OCI-LY7 (cell line): ENCODE measurements at regions of chr4 and their contacts with region 1.

Region 1: GRCh38 chr4:128863312-128864075 is 54.0 kb downstream of the JADE1 start:
- DNase-seq: peak; percentile 62
- H3K4me3 ChIP-seq: no peak overlapping the region
- H3K27ac ChIP-seq: no peak overlapping the region
- H3K4me1 ChIP-seq: peaks cover 5% of the 10 kb centered on the region
- CTCF ChIP-seq: peak; percentile 97

Region 2: GRCh38 chr4:128191115-128191781 is 672.2 kb before region 1 on chr4:
- CTCF ChIA-PET with region 1: no interaction called
- POLR2A ChIA-PET with region 1: no interaction called
- intact Hi-C with region 1: loop called (anchors 1 kb)
- DNase-seq: peak; percentile 77
- H3K4me3 ChIP-seq: no peak overlapping the region
- H3K27ac ChIP-seq: no peak overlapping the region
- H3K4me1 ChIP-seq: no peaks in the 10 kb centered on the region
- CTCF ChIP-seq: peak; percentile 99

Region 3: GRCh38 chr4:128454281-128455075 is 409.0 kb before region 1 on chr4:
- CTCF ChIA-PET with region 1: no interaction called
- POLR2A ChIA-PET with region 1: no interaction called
- intact Hi-C with region 1: loop called (anchors 5 kb)
- DNase-seq: peak; percentile 70
- H3K4me3 ChIP-seq: no peak overlapping the region
- H3K27ac ChIP-seq: no peak overlapping the region
- H3K4me1 ChIP-seq: no peaks in the 10 kb centered on the region
- CTCF ChIP-seq: peak; percentile 80

Region 4: DNA sequence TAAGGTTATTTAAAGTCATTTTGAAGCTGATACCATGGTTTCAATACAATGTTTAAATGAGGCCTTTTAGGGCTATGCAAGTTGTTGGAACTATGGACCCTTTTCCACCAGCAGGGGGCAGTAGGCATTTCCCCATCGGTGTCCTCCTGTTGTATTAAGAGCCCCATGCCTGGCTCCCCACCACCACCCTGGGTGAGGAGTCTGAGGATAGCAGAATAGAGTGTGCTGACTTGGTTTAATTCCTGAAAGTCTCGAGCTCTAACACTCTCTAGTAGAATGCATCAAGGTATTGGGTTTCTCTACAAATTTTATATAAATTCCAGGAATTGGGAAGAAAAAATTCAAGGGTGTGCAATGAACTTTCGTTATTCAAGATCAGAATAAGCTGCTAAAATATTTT is 288.8 kb before region 1 on chr4:
- CTCF ChIA-PET with region 1: no interaction called
- POLR2A ChIA-PET with region 1: no interaction called
- intact Hi-C with region 1: loop called (anchors 5 kb)
- DNase-seq: peak; percentile 74
- H3K4me3 ChIP-seq: no peak overlapping the region
- H3K27ac ChIP-seq: no peak overlapping the region
- H3K4me1 ChIP-seq: no peaks in the 10 kb centered on the region
- CTCF ChIP-seq: peak; percentile 89

Region 5: DNA sequence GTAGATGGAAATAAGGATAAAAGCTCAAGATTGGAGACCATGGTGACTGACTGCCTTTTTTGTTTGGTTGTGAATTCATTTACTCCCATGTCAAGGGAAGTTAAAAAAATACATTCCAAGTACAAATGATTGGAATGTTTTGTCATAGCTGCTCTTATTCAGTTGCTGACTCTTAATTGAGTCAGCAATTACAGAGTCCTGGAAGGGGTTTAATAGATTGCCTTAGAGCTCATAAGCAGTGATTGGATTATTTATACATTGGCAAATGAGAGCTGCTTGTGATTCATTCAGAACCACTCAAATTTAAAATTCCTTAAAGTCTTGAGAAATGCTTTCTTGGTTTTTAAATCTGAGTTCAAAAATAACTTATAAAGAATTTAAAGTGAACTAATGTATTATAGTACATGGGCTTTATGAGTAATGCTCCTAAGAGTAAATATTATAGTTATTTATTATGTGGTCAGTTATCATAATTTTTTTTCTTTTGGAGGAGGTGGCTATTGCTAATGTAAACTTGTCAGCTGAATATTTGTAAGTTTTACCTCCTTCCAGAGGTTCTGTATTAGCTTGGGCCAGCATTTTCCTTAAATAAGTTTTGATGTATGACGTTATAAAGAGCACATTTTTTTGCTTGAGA is 40.4 kb before region 1 on chr4:
- CTCF ChIA-PET with region 1: no interaction called
- POLR2A ChIA-PET with region 1: no interaction called
- intact Hi-C with region 1: loop called (anchors 5 kb)
- DNase-seq: no peak
- H3K4me3 ChIP-seq: no peak overlapping the region
- H3K27ac ChIP-seq: no peak overlapping the region
- H3K4me1 ChIP-seq: peaks cover 61% of the 10 kb centered on the region
- CTCF ChIP-seq: no peak

Region 6: GRCh38 chr4:128924951-128925350 is 61.5 kb after region 1 on chr4:
- CTCF ChIA-PET with region 1: no interaction called
- POLR2A ChIA-PET with region 1: no interaction called
- intact Hi-C with region 1: no loop called
- DNase-seq: no peak
- H3K4me3 ChIP-seq: no peak overlapping the region
- H3K27ac ChIP-seq: no peak overlapping the region
- H3K4me1 ChIP-seq: no peaks in the 10 kb centered on the region
- CTCF ChIP-seq: no peak

Region 7: GRCh38 chr4:129140521-129140920 is 277.0 kb after region 1 on chr4:
- CTCF ChIA-PET with region 1: no interaction called
- POLR2A ChIA-PET with region 1: no interaction called
- intact Hi-C with region 1: no loop called
- DNase-seq: no peak
- H3K4me3 ChIP-seq: no peak overlapping the region
- H3K27ac ChIP-seq: no peak overlapping the region
- H3K4me1 ChIP-seq: no peaks in the 10 kb centered on the region
- CTCF ChIP-seq: no peak